PC-3 (cell line): ENCODE measurements at regions of chr20 and their contacts with region 1.

Region 1: DNA sequence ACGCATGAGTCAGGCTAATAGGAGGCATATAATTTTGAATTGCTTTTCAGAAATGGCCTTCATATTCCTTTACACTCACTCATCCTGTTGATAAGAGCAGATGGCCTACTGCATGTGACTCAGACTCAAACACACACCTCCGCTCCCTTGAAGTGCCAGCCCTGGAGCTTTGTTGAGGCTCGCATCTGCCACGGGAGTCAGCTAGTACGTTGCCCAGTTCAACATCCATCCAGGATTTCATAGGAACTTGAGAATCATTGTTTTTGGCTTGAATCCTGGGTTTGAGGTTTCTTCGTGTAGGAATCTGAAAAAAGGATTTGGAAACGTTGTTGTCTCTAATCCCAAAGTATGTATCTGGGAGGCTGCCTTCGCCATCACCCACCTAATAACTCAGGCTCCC is 87.4 kb upstream of the JAG1 start:
- DNase-seq: peak; percentile 93
- ATAC-seq: peak; percentile 65
- H3K4me3 ChIP-seq: 0 out of 2 replicates have a peak overlapping the region, but pooled peaks have one; percentile 9
- H3K27ac ChIP-seq: peak overlapping the region; percentile 94
- H3K4me1 ChIP-seq: peaks cover 42% of the 10 kb centered on the region
- H3K27me3 ChIP-seq: no peaks in the 10 kb centered on the region
- CTCF ChIP-seq: no peak

Region 2: DNA sequence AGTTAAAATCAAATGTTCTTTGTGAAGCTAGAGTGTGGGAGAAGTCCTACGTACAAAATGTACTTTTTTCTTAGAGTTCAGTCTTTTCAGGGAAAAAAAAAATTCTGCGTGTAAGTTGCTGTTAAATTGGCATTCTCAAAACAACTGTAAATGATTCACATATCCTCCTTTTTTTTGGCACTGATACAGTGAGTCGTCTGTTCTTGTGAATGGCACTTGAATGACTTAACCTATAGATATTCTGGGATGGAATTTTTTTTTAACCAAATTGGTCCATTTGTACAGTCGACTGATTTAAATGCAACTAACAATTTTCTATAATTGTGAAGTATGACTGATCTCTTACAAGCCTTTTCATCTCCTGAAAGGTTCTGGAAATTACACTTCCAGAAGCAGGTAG is 82.0 kb before region 1 on chr20:
- CTCF ChIA-PET with region 1: interaction called, 12 read pairs
- POLR2A ChIA-PET with region 1: interaction called, 7 read pairs
- intact Hi-C with region 1: loop called (anchors 1 kb)
- DNase-seq: peak; percentile 93
- ATAC-seq: peak; percentile 17
- H3K4me3 ChIP-seq: no peak overlapping the region
- H3K27ac ChIP-seq: peak overlapping the region; percentile 69
- H3K4me1 ChIP-seq: peaks cover 30% of the 10 kb centered on the region
- H3K27me3 ChIP-seq: no peaks in the 10 kb centered on the region
- CTCF ChIP-seq: no peak

Region 3: GRCh38 chr20:10715035-10715434 is 46.2 kb before region 1 on chr20:
- CTCF ChIA-PET with region 1: interaction called, 4 read pairs
- POLR2A ChIA-PET with region 1: no interaction called
- intact Hi-C with region 1: loop called (anchors 2 kb)
- DNase-seq: peak; percentile 85
- ATAC-seq: peak; percentile 61
- H3K4me3 ChIP-seq: no peak overlapping the region
- H3K27ac ChIP-seq: peak overlapping the region; percentile 48
- H3K4me1 ChIP-seq: peaks cover 55% of the 10 kb centered on the region
- H3K27me3 ChIP-seq: no peaks in the 10 kb centered on the region
- CTCF ChIP-seq: no peak

Region 4: DNA sequence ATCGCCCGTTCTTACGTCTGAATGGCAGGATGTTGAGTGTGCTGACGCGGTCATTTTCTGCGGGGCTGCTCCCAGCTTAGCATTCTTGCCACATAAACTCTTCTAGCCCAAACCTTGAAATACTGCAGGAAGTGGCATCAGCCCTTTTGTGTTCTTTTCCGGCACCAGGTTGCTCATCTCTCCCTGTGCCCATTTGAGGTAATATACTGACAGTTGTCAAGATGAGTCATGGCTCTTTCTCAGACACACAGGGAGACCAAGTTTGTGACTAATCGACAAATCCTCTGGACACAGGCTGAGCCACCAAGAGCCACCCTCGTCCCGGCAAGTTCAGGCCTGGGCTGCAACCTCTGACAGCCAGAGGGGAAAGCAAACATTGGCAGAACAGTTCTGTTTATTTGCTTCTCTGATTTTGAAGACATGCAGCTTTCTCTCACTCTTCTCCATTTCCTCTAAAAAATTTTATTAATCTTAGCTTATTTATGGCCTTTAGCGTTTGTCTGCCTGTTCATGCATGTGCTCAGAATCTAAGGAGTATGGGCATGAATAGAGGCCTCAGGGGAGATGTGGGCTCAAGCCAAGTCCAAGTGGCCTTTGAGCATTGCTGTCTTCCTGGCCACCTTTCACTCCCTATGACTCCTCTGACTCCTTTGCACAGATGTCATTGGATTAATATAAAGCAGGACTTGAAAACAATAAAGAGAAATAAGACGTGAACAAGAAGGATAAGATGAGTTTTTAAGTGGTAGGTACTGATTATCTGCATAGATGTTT is 240.7 kb after region 1 on chr20:
- CTCF ChIA-PET with region 1: no interaction called
- POLR2A ChIA-PET with region 1: no interaction called
- intact Hi-C with region 1: loop called (anchors 5 kb)
- DNase-seq: peak; percentile 99
- ATAC-seq: peak; percentile 99
- H3K4me3 ChIP-seq: 0 out of 2 replicates have a peak overlapping the region, but pooled peaks have one; percentile 7
- H3K27ac ChIP-seq: peak overlapping the region; percentile 93
- H3K4me1 ChIP-seq: peaks cover 24% of the 10 kb centered on the region
- H3K27me3 ChIP-seq: no peaks in the 10 kb centered on the region
- CTCF ChIP-seq: no peak

Region 5: GRCh38 chr20:11153819-11154218 is 392.6 kb after region 1 on chr20:
- CTCF ChIA-PET with region 1: no interaction called
- POLR2A ChIA-PET with region 1: no interaction called
- intact Hi-C with region 1: loop called (anchors 2 kb)
- DNase-seq: peak; percentile 82
- ATAC-seq: peak; percentile 70
- H3K4me3 ChIP-seq: no peak overlapping the region
- H3K27ac ChIP-seq: peak overlapping the region; percentile 63
- H3K4me1 ChIP-seq: peaks cover 49% of the 10 kb centered on the region
- H3K27me3 ChIP-seq: no peaks in the 10 kb centered on the region
- CTCF ChIP-seq: no peak